Uterus (tissue), 4 donors: ENCODE measurements at regions of chr5 and their contacts with region 1.

Region 1: GRCh38 chr5:178859625-178860531 is at the start of gene ZNF354B:
- DNase-seq: peak; percentile 88 to 89
- H3K4me3 ChIP-seq: peak within 1 kb of the TSS; percentile 43 to 95
- H3K27ac ChIP-seq: peak within 1 kb of the TSS; percentile 69 to 84
- H3K4me1 ChIP-seq: peaks cover 0 to 3% of the 10 kb centered on the region in 2 donors
- H3K27me3 ChIP-seq: no peaks in the 10 kb centered on the region
- CTCF ChIP-seq: peak; percentile 15 to 34 (median 22)
- POLR2A ChIP-seq: peak; percentile 37 to 65
- total RNA-seq, gene ZNF354B: 24.1 to 49.7 (median 28.3) TPM

Region 2: DNA sequence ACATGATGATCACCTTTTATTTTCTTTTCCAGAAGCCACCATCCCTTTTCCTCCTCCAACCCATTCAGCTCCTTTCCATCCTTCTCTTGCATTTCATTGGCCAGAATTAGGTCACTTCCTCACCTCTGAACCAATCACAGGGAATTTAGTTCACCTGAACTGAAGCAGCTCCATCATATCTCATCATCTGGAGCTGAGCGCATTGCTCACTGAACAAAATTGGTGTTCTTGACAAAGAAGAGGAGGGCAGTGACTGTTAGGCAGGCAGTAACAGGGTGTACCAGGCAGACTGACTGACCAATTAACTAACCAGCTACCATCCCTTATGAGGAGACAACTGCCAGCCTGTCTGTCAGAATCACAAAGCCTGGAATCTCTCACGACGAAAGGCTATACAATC is 127.6 kb before region 1 on chr5:
- intact Hi-C with region 1: loop called (anchors 10 kb)
- DNase-seq: no peak
- H3K4me3 ChIP-seq: no peak overlapping the region
- H3K27ac ChIP-seq: no peak overlapping the region
- H3K4me1 ChIP-seq: peaks cover 0 to 3% of the 10 kb centered on the region in 2 donors
- H3K27me3 ChIP-seq: no peaks in the 10 kb centered on the region
- CTCF ChIP-seq: no peak
- POLR2A ChIP-seq: no peak

Region 3: DNA sequence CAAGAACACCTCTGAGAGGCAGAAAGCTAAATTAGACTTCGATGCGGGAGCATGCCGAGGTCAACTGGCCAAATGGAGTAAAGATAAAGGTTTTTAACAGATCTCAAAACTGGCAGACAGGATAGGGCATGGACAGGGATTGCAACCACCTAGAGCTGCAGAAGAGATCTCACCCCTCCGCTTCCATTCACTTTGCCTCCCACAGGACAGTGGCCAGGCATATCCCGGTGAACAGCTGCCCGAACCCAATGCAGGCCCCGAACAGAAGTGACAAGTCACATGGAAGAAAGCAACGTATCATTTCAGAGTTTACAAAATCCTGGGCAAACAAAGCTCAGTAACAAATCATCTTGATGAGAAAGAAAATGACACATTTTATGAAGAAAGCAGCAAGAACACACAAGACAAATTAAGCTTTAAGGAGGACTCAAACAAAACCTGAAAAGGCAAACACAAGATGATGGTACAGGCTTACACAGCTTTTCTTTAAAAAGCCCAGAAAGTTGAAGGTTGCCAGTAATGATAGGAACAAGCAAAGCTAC is 1193.3 kb after region 1 on chr5:
- intact Hi-C with region 1: no loop called
- DNase-seq: no peak
- H3K4me3 ChIP-seq: no peak overlapping the region
- H3K27ac ChIP-seq: no peak overlapping the region
- H3K4me1 ChIP-seq: no peaks in the 10 kb centered on the region
- H3K27me3 ChIP-seq: no peaks in the 10 kb centered on the region
- CTCF ChIP-seq: no peak
- POLR2A ChIP-seq: no peak